AG04450 (cell line): ENCODE measurements at regions of chr15 and their contacts with region 1.

Region 1: GRCh38 chr15:91561371-91562100 is 292.0 kb upstream of the SLCO3A1 start:
- DNase-seq: peak; percentile 85
- H3K4me3 ChIP-seq: peak overlapping the region; percentile 31
- H3K27ac ChIP-seq: peak overlapping the region; percentile 94
- H3K27me3 ChIP-seq: no peaks in the 10 kb centered on the region
- CTCF ChIP-seq: no peak

Region 2: GRCh38 chr15:91535856-91536500 is 25.6 kb before region 1 on chr15:
- CTCF ChIA-PET with region 1: no interaction called
- POLR2A ChIA-PET with region 1: interaction called, 10 read pairs
- DNase-seq: no peak
- H3K4me3 ChIP-seq: no peak overlapping the region
- H3K27ac ChIP-seq: no peak overlapping the region
- H3K27me3 ChIP-seq: no peaks in the 10 kb centered on the region
- CTCF ChIP-seq: no peak